ENCODE measurements at regions of chr19 and their contacts with region 1.

Region 1: DNA sequence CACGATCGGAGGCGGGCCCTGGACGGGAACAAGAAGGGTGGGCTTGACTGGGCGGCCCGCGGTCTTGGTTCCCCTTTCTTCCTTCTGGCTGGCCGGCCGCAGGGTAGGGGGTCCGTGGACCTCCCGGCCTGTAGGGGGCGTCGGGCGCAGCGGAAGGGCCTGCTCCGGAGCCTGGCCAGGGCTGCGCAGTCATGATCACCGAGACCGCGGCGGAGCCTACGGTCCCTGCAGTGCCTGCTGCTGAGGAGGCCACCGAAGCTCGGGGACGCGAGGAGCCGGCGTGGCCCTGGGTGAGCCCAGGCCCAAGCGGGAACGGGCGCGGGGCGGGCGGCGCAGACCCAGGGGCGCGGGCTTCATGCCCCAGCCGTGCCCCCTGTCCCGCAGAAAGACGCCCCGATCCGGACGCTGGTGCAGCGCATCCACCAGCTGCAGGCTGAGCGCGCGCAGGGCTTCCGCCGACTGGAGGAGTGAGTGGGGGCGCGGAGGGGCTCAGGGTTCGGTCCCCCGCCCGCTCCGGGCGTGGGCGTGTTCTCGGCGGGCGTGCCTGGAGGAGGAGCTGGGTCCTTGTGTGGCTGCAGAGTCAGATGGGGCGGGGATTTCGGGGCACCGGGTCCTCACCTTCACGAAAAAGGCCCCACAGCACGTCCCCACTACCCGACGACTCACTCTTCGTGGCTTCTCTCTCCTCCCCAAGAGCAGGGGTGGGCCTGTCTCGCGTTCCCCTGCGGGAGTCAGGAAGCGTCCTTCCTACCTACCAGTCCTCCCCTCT is at the start of gene REX1BD:
- DNase-seq: peak in 1 of 2 experiments; percentile 93
- H3K4me3 ChIP-seq: peak within 1 kb of the TSS; percentile 78 to 91 (median 84)
- H3K27ac ChIP-seq: peak within 1 kb of the TSS; percentile 94
- H3K4me1 ChIP-seq: peaks cover 2 to 18% (median 12%) of the 10 kb centered on the region in 4 experiments
- H3K27me3 ChIP-seq: no peaks in the 10 kb centered on the region; a peak in 1 of 7 replicates
- CTCF ChIP-seq: peak; percentile 90 to 92 (median 91)
- EP300 ChIP-seq: peak in 1 of 2 experiments; percentile 66; a peak in 1 of 3 replicates
- POLR2A ChIP-seq: peak; percentile 75 to 87
- RAD21 ChIP-seq: peak; percentile 26 to 45
- total RNA-seq, gene REX1BD: 56.8 and 63.1 TPM in 2 replicates

Region 2: DNA sequence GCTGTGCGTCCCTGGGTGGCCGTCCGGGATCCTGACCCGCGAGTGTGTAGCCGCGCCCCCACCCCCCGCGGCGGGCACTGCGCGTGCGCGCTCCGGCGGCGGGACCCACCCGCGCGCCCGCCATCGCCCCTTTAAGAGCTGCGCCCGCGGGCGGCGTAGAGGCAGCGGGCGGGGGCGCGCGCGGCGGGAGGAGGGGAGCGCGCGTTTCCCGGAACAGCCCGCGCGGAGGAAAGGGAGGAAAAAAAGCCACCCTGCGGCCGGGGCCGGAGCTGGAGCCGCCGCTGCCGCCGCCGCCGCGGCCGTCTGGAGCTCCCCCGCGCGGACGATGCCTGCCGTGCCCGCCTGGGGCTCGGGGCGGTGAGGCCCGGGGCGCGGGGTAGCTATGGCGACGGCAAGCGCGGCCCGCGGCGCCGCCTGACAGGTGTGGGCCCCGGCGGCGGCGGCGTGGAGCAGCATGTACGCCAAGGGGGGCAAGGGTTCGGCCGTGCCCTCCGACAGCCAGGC is 169.5 kb before region 1 on chr19 and contains the start of gene SSBP4:
- CTCF ChIA-PET with region 1: no interaction called
- POLR2A ChIA-PET with region 1: no interaction called
- DNase-seq: peak in 1 of 2 experiments; percentile 87
- H3K4me3 ChIP-seq: peak within 1 kb of the TSS; percentile 33 to 63 (median 46)
- H3K27ac ChIP-seq: no peak within 1 kb of the TSS
- H3K4me1 ChIP-seq: peaks cover 0 to 39% (median 25%) of the 10 kb centered on the region in 4 experiments; a peak in 6 of 7 replicates
- H3K27me3 ChIP-seq: peaks cover 5 to 29% (median 23%) of the 10 kb centered on the region in 4 experiments
- CTCF ChIP-seq: peak; percentile 32 to 80 (median 39)
- EP300 ChIP-seq: peak; percentile 62 to 98; a peak in 2 of 3 replicates
- POLR2A ChIP-seq: no peak
- RAD21 ChIP-seq: peak in 1 of 2 experiments; percentile 37; a peak in 2 of 4 replicates
- total RNA-seq, gene SSBP4: 26.4 and 30.5 TPM in 2 replicates

Region 3: DNA sequence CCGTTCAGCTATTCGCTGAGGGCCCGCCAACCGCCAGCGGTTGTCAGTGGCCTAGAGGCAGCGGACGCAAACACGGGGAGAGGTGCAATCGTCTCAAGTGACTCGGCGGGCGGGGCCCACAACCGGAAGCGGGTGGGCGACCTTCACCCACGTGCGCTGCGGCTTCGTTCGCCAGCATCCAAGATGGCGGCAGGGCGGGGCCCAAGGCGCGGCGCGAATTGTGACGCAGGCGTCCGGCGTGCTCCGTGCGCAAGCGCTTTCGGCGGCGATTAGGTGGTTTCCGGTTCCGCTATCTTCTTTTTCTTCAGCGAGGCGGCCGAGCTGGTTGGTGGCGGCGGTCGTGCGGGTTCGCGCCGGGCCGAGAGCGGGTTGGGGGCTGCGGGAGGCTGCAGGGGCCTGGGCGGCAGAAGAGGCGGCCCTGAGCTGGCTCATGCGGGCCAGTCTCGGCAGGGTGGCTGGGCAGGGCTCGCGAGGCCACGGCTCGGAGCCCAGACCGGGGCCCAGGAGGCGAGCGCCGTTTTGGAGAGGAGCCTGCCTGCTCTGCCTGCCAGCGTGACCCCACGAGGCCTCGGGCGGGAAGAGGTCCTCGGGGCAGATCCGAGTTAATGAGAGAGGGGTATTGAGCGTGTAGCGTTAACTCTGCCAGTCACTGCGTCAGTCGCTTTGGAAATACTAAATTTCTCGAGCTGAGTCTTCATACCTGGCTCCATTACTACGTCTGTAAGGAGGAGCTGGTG is 17.1 kb before region 1 on chr19 and contains the start of gene UBA52:
- CTCF ChIA-PET with region 1: interaction called, 28 read pairs
- POLR2A ChIA-PET with region 1: interaction called, 112 read pairs
- DNase-seq: peak; percentile 89 to 99
- H3K4me3 ChIP-seq: peak within 1 kb of the TSS; percentile 93 to 99 (median 98)
- H3K27ac ChIP-seq: peak within 1 kb of the TSS; percentile 89
- H3K4me1 ChIP-seq: peaks cover 0 to 9% (median 6%) of the 10 kb centered on the region in 4 experiments; a peak in 6 of 7 replicates
- H3K27me3 ChIP-seq: no peaks in the 10 kb centered on the region
- CTCF ChIP-seq: peak in 1 of 3 experiments; percentile 15; a peak in 1 of 4 replicates
- EP300 ChIP-seq: no peak
- POLR2A ChIP-seq: peak in 1 of 2 experiments; percentile 91; a peak in 2 of 3 replicates
- RAD21 ChIP-seq: no peak
- total RNA-seq, gene UBA52: 1,331 and 1,340 TPM in 2 replicates

Region 4: DNA sequence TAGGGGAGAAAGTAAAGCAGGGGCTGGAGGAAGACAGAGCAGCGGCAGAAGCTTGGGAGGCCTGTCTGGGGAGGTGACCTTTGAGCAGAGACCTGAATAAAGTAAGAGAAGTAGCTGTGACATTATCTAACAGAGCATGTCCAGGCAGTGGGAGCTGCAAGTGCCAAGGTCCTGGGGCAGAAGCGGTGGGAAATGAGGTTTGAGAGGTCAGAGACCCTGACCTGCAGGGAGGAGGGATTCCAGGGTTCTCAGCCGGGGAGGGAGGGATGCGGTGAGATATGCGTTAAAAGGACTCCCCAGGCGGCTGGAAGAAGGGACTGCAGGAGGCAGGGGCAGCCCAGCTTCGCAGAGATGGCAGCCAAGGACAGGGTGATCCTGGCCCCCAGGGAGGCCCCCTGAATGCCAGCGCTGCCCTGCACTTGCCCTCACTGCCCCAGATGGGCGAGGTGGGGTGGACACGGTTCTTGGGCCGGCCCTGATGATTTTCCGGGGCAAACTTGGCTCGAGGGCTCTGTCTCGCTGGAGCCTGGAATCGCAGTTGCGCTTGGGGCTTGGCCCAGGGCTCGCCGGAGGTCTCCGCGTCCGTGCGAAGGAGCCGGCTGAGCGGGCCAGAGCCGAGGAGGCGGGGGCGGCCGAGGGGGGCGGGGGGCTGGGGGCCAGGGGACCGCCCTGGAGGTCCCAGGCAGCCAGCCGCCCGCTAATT is 14.6 kb after region 1 on chr19:
- CTCF ChIA-PET with region 1: interaction called, 31 read pairs
- POLR2A ChIA-PET with region 1: interaction called, 23 read pairs
- DNase-seq: peak in 1 of 2 experiments; percentile 74
- H3K4me3 ChIP-seq: peak overlapping the region in 3 of 4 experiments; percentile 26 to 53 (median 36); a peak in 5 of 8 replicates
- H3K27ac ChIP-seq: no peak overlapping the region
- H3K4me1 ChIP-seq: peaks cover 10 to 31% (median 23%) of the 10 kb centered on the region in 4 experiments
- H3K27me3 ChIP-seq: peaks cover 53 to 69% (median 66%) of the 10 kb centered on the region in 4 experiments
- CTCF ChIP-seq: peak in 2 of 3 experiments; percentile 45 to 51; a peak in 3 of 4 replicates
- EP300 ChIP-seq: no peak
- POLR2A ChIP-seq: no peak
- RAD21 ChIP-seq: peak in 1 of 2 experiments; percentile 30; a peak in 1 of 4 replicates

Region 5: DNA sequence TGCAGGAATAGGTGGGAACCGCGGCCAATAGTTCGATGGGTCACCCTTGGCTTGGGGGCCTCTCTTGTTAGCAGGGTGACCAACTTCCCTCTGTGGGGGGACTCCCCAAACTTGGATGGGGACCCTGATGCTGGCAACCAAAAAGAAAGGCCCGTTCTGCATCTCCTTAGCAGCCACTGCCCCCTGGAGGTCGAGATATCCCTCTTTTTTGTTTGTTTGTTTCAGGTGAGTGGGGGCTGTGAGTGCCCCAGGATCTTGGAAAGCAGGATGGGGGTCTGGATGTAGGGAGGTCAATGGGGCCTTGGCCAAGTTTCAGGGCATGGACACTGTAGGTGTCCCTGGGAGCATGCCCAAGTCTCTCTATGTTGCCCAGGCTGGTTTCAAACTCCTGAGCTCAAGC is 87.0 kb after region 1 on chr19:
- CTCF ChIA-PET with region 1: interaction called, 139 read pairs
- POLR2A ChIA-PET with region 1: interaction called, 6 read pairs
- DNase-seq: peak in 1 of 2 experiments; percentile 76
- H3K4me3 ChIP-seq: no peak overlapping the region
- H3K27ac ChIP-seq: no peak overlapping the region
- H3K4me1 ChIP-seq: peaks cover 0 to 11% (median 3%) of the 10 kb centered on the region in 4 experiments; a peak in 5 of 7 replicates
- H3K27me3 ChIP-seq: no peaks in the 10 kb centered on the region
- CTCF ChIP-seq: peak; percentile 63 to 75 (median 67)
- EP300 ChIP-seq: no peak
- POLR2A ChIP-seq: no peak
- RAD21 ChIP-seq: peak; percentile 85 to 88